ENCODE measurements at regions of chr15 and their contacts with region 1.

Region 1: GRCh38 chr15:60212536-60212935 is 185.2 kb downstream of the ANXA2 start:
- DNase-seq: peak in 1 of 2 experiments; percentile 13
- H3K4me3 ChIP-seq: no peak overlapping the region
- H3K27ac ChIP-seq: no peak overlapping the region
- H3K4me1 ChIP-seq: no peaks in the 10 kb centered on the region
- H3K27me3 ChIP-seq: no peaks in the 10 kb centered on the region
- CTCF ChIP-seq: peak; percentile 11 to 43 (median 22); a peak in 3 of 4 replicates
- EP300 ChIP-seq: no peak
- POLR2A ChIP-seq: no peak
- RAD21 ChIP-seq: peak; percentile 44 to 54

Region 2: GRCh38 chr15:60044636-60045270 is 167.8 kb before region 1 on chr15:
- CTCF ChIA-PET with region 1: no interaction called
- POLR2A ChIA-PET with region 1: no interaction called
- DNase-seq: no peak
- H3K4me3 ChIP-seq: no peak overlapping the region
- H3K27ac ChIP-seq: no peak overlapping the region
- H3K4me1 ChIP-seq: peaks cover 0 to 8% (median 0%) of the 10 kb centered on the region in 4 experiments; a peak in 3 of 7 replicates
- H3K27me3 ChIP-seq: no peaks in the 10 kb centered on the region
- CTCF ChIP-seq: no peak
- EP300 ChIP-seq: no peak
- POLR2A ChIP-seq: no peak
- RAD21 ChIP-seq: no peak

Region 3: DNA sequence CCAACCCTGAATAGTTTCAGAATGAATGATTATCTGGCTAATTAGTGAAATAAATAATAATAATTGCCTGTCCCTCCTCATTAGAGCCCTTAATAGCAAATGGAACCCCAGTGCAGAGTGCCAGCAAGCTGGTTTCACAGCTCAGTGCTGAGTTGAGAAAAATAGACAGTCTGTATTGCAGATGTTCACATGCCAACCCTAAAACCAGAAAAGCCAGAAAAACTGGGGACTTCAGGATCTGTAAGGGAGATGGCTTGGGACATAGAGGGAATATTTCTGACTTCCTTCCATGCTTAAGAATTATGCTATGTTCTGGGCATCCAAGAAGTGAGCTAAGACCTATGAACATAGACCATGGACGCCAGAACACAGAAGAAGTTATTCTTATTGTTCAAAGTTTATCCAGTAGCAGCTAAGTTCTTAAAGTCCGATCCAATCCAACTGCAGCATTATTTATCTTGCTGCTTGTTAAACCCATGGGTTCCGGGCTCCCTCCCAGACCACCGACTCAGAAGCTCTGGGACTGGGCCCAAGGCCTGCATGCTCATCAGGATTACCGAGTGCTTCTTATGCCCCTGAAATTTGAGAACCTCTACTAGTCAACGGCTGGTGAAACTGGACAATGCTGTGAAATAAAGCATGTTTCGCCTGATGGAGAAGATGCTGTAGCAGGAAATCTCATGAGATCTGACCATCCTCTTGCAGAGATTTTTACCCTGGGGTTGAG is 50.1 kb before region 1 on chr15:
- CTCF ChIA-PET with region 1: no interaction called
- POLR2A ChIA-PET with region 1: no interaction called
- DNase-seq: no peak
- H3K4me3 ChIP-seq: no peak overlapping the region
- H3K27ac ChIP-seq: no peak overlapping the region
- H3K4me1 ChIP-seq: peaks cover 0 to 3% (median 0%) of the 10 kb centered on the region in 4 experiments; a peak in 4 of 7 replicates
- H3K27me3 ChIP-seq: no peaks in the 10 kb centered on the region
- CTCF ChIP-seq: no peak
- EP300 ChIP-seq: no peak
- POLR2A ChIP-seq: no peak
- RAD21 ChIP-seq: no peak

Region 4: DNA sequence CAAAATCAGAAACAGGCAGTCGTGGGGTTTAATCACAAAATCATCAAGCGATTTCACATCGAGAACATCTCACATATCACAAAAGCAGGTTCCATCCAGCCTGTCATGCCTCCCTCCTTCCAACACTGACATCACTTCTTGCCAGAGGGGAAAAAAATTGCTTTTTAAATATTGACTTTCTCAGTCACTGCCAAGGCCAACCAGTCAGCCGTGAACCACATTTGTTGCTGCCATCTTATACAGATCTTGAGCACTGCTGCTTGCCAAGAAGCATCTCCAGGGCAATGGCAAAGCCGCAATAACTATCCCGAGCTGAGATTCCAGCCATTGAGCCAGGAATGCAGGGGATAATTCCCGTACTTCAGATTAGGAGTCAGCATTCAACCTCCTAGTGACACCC is 10.6 kb after region 1 on chr15:
- CTCF ChIA-PET with region 1: interaction called, 41 read pairs
- POLR2A ChIA-PET with region 1: no interaction called
- DNase-seq: no peak
- H3K4me3 ChIP-seq: no peak overlapping the region
- H3K27ac ChIP-seq: no peak overlapping the region
- H3K4me1 ChIP-seq: no peaks in the 10 kb centered on the region
- H3K27me3 ChIP-seq: no peaks in the 10 kb centered on the region
- CTCF ChIP-seq: no peak
- EP300 ChIP-seq: no peak
- POLR2A ChIP-seq: no peak
- RAD21 ChIP-seq: no peak

Region 5: GRCh38 chr15:60237421-60237820 is 24.9 kb after region 1 on chr15:
- CTCF ChIA-PET with region 1: interaction called, 10 read pairs
- POLR2A ChIA-PET with region 1: no interaction called
- DNase-seq: no peak
- H3K4me3 ChIP-seq: no peak overlapping the region
- H3K27ac ChIP-seq: no peak overlapping the region
- H3K4me1 ChIP-seq: peaks cover 0 to 4% (median 2%) of the 10 kb centered on the region in 4 experiments; a peak in 2 of 7 replicates
- H3K27me3 ChIP-seq: no peaks in the 10 kb centered on the region
- CTCF ChIP-seq: no peak
- EP300 ChIP-seq: no peak
- POLR2A ChIP-seq: no peak
- RAD21 ChIP-seq: no peak

Measured in H1 (cell line).